Activated CD8-positive, alpha-beta T cell treated with anti-CD3 and anti-CD28 coated beads, Interleukin-2, amount 10 ng/mL, durations not matched to agents 7 days and 5 days (primary cell): ENCODE measurements at regions of chr9 and their contacts with region 1.

Region 1: DNA sequence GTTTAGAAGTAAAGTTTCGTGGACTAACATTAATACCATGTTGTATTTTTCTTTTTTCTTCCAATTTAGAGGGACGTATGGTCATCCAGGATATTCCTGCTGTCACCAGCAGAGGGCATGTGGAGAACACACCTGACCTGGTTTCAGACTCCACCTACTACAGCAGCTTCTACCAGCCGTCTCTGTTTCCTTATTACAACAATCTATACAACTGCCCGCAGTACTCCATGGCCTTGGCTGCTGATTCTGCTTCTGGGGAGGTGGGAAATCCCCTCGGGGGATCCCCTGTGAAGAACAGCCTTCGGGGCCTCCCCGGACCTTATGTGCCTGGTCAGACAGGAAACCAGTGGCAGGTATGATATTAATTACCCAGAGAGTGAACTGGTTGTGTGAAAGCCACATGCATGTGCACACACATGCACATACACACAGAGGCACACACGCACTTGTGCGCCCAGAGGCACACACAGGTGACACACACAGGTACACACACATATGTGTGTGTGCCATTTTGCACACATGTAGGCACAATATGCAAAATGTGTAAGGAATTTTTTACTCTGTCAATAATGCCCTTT is 52.4 kb downstream of the DMRT1 start:
- DNase-seq: peak; percentile 69
- ATAC-seq: peak; percentile 93
- H3K4me3 Mint-ChIP-seq: no peak overlapping the region
- H3K27ac Mint-ChIP-seq: no peak overlapping the region
- H3K4me1 Mint-ChIP-seq: peaks cover 8% of the 10 kb centered on the region
- H3K27me3 Mint-ChIP-seq: peaks cover 20% of the 10 kb centered on the region

Region 2: DNA sequence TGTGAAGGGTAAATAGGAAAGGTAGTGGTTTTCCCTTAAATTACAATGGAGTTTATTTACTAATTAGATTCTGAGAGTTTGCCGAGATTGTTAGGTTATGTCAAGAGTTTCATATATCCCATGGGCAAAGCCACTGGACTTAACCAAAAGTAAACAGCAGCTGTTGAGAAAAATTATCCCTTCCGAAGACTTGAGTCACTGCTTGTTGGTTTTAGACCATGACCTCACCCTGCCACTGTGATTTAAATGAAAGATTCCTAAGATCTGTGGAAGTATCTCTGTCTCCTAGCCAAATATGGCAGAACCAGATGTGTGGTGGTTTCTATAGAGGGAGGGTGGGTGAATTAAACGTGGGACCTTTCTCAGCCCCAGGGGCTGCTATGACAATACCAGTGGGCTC is 101.8 kb after region 1 on chr9:
- CTCF ChIA-PET with region 1: interaction called, 12 read pairs
- POLR2A ChIA-PET with region 1: no interaction called
- DNase-seq: no peak
- ATAC-seq: no peak
- H3K4me3 Mint-ChIP-seq: no peak overlapping the region
- H3K27ac Mint-ChIP-seq: no peak overlapping the region
- H3K4me1 Mint-ChIP-seq: peaks cover 8% of the 10 kb centered on the region
- H3K27me3 Mint-ChIP-seq: peaks cover 15% of the 10 kb centered on the region

Region 3: GRCh38 chr9:1009101-1009707 is 115.3 kb after region 1 on chr9:
- CTCF ChIA-PET with region 1: interaction called, 52 read pairs
- POLR2A ChIA-PET with region 1: no interaction called
- DNase-seq: peak; percentile 82
- ATAC-seq: peak; percentile 94
- H3K4me3 Mint-ChIP-seq: no peak overlapping the region
- H3K27ac Mint-ChIP-seq: no peak overlapping the region
- H3K4me1 Mint-ChIP-seq: peaks cover 14% of the 10 kb centered on the region
- H3K27me3 Mint-ChIP-seq: peaks cover 10% of the 10 kb centered on the region